ENCODE measurements at regions of chr10 and their contacts with region 1.

Region 1: GRCh38 chr10:84264611-84265141 is 19.8 kb downstream of the RGR start:
- DNase-seq: peak; percentile 70
- ATAC-seq: peak; percentile 85 to 93
- H3K4me3 ChIP-seq: no peak overlapping the region
- H3K27ac ChIP-seq: no peak overlapping the region
- H3K4me1 ChIP-seq: peaks cover 14% of the 10 kb centered on the region
- H3K27me3 ChIP-seq: peaks cover 8% of the 10 kb centered on the region
- CTCF ChIP-seq: peak; percentile 90

Region 2: DNA sequence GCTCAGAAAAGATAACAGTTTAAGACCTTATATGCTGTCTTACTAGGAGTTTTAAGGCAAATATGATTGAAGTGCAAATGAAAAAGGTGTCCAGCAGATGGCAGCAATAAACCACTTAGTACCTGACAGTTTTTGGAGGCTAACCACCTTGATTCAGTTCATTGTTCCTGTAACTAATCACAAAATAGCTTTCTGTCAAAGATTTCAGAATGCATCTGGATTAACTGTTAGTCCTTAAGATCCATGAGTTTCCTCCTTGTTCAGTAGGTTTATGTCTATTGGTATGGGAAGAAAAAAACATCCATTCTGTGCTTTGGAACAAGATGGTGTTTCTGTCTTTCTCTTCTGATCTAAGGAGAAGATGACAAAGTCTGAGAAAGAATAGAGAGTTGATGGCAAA is 110.3 kb after region 1 on chr10:
- intact Hi-C with region 1: loop called (anchors 10 kb)
- DNase-seq: no peak
- ATAC-seq: peak in 1 of 2 donors; percentile 69
- H3K4me3 ChIP-seq: no peak overlapping the region
- H3K27ac ChIP-seq: no peak overlapping the region
- H3K4me1 ChIP-seq: peaks cover 15% of the 10 kb centered on the region
- H3K27me3 ChIP-seq: no peaks in the 10 kb centered on the region
- CTCF ChIP-seq: peak; percentile 70

Region 3: GRCh38 chr10:84537447-84537931 is 272.8 kb after region 1 on chr10:
- intact Hi-C with region 1: loop called (anchors 5 kb)
- DNase-seq: peak; percentile 60
- ATAC-seq: peak; percentile 87 to 88
- H3K4me3 ChIP-seq: no peak overlapping the region
- H3K27ac ChIP-seq: no peak overlapping the region
- H3K4me1 ChIP-seq: peaks cover 13% of the 10 kb centered on the region
- H3K27me3 ChIP-seq: peaks cover 23% of the 10 kb centered on the region
- CTCF ChIP-seq: peak; percentile 83